ENCODE measurements at regions of chr9 and their contacts with region 1.

Region 1: GRCh38 chr9:124202447-124202971 is 55.2 kb upstream of the NEK6 start:
- DNase-seq: peak in 3 of 10 donors; percentile 26 to 77 (median 47)

Region 2: DNA sequence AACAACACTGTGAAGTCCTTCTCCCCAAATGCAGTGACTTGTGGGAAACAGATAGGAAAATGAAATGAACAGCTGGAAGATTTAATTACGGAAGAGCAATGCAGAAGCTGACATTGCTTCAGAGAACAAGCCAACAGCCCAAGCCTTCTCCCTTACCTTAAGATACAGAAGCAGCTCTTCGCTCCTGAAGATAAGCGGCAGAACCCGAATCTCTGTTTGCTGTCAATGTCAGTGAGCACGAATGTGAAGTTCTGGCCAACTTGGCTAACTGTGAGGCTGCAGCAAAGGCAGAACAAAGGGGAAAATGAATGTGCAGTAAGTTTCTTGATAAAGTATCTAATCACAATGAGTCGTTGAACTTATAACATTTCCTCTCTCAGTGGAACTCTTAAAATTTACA is 445.0 kb before region 1 on chr9:
- intact Hi-C with region 1: no loop called
- DNase-seq: no peak

Region 3: GRCh38 chr9:124133727-124134126 is 68.8 kb before region 1 on chr9:
- intact Hi-C with region 1: loop called (anchors 10 kb)
- DNase-seq: peak in 8 of 10 donors; percentile 16 to 86 (median 42)